Tibial artery (tissue), 4 donors: ENCODE measurements at regions of chr2 and their contacts with region 1.

Region 1: DNA sequence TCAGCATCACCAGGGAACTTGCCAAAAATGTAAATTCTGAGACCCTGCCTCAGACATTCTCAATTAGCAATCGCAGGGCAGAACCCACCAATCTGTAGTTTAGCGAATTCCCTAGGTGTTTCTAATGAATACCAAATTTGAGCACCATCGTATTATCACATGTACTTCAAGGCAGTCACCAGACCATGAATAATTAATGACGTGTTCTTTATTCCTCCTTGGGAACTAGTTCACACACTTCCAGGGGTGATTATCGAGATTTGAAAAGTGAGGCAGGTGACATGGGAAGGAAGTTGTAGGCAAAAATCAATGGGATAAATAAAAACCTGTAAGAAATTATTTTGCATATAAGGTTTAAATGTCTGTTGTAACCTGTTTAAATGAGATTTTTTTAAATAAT is 102.5 kb upstream of the CRIM1 start:
- DNase-seq: no peak
- H3K4me3 ChIP-seq: no peak overlapping the region
- H3K27ac ChIP-seq: no peak overlapping the region
- H3K4me1 ChIP-seq: no peaks in the 10 kb centered on the region
- H3K27me3 ChIP-seq: no peaks in the 10 kb centered on the region
- CTCF ChIP-seq: no peak

Region 2: GRCh38 chr2:34785206-34785785 is 1467.8 kb before region 1 on chr2:
- intact Hi-C with region 1: loop called (anchors 5 kb)
- DNase-seq: no peak
- H3K4me3 ChIP-seq: no peak overlapping the region
- H3K27ac ChIP-seq: no peak overlapping the region
- H3K4me1 ChIP-seq: no peaks in the 10 kb centered on the region
- H3K27me3 ChIP-seq: no peaks in the 10 kb centered on the region
- CTCF ChIP-seq: no peak

Region 3: GRCh38 chr2:36146765-36147164 is 106.3 kb before region 1 on chr2:
- intact Hi-C with region 1: no loop called
- DNase-seq: no peak
- H3K4me3 ChIP-seq: no peak overlapping the region
- H3K27ac ChIP-seq: no peak overlapping the region
- H3K4me1 ChIP-seq: no peaks in the 10 kb centered on the region
- H3K27me3 ChIP-seq: no peaks in the 10 kb centered on the region
- CTCF ChIP-seq: no peak

Region 4: GRCh38 chr2:36277146-36277808 is 24.2 kb after region 1 on chr2:
- intact Hi-C with region 1: no loop called
- DNase-seq: no peak
- H3K4me3 ChIP-seq: no peak overlapping the region
- H3K27ac ChIP-seq: no peak overlapping the region
- H3K4me1 ChIP-seq: no peaks in the 10 kb centered on the region
- H3K27me3 ChIP-seq: no peaks in the 10 kb centered on the region
- CTCF ChIP-seq: no peak